Activated T-helper 2 cell treated with anti-CD3 and anti-CD28 coated beads, Interferon-gamma antibody, Interleukin-2, Interleukin-4, amounts not matched to agents 10 μg/mL and 5 μg/mL and 100 μg/mL, durations not matched to agents 14 hours and 24 hours and 36 hours (primary cell): ENCODE measurements at regions of chr9 and their contacts with region 1.

Region 1: GRCh38 chr9:130866474-130866965 is 30.1 kb downstream of the QRFP start:
- DNase-seq: peak; percentile 31
- H3K4me3 Mint-ChIP-seq: no peak overlapping the region
- H3K27ac Mint-ChIP-seq: no peak overlapping the region
- H3K4me1 Mint-ChIP-seq: no peaks in the 10 kb centered on the region
- H3K27me3 Mint-ChIP-seq: no peaks in the 10 kb centered on the region

Region 2: GRCh38 chr9:130770679-130771442 is 95.7 kb before region 1 on chr9:
- intact Hi-C with region 1: loop called (anchors 1 kb)
- DNase-seq: no peak
- H3K4me3 Mint-ChIP-seq: no peak overlapping the region
- H3K27ac Mint-ChIP-seq: no peak overlapping the region
- H3K4me1 Mint-ChIP-seq: peaks cover 9% of the 10 kb centered on the region
- H3K27me3 Mint-ChIP-seq: no peaks in the 10 kb centered on the region

Region 3: DNA sequence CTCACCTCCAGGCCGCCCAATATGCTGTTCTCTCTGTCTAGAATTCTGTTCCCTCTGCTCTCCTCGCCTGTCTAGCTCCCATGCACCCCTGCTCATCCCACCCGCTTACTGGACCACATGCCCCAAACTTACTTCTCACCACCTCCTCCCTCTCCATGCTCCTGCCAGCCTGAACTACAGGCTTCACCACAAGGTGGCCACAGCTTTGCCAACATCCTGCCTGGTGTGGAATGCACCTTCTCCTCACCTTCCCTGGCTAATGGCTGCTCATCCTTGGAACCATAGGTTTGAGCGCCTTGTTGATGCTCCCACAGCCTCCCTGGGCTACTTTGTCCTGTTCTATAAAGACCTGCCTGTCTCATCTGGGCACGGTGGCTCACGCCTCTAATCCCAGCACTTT is 152.1 kb after region 1 on chr9:
- intact Hi-C with region 1: no loop called
- DNase-seq: no peak
- H3K4me3 Mint-ChIP-seq: no peak overlapping the region
- H3K27ac Mint-ChIP-seq: no peak overlapping the region
- H3K4me1 Mint-ChIP-seq: no peaks in the 10 kb centered on the region
- H3K27me3 Mint-ChIP-seq: peaks cover 4% of the 10 kb centered on the region

Region 4: DNA sequence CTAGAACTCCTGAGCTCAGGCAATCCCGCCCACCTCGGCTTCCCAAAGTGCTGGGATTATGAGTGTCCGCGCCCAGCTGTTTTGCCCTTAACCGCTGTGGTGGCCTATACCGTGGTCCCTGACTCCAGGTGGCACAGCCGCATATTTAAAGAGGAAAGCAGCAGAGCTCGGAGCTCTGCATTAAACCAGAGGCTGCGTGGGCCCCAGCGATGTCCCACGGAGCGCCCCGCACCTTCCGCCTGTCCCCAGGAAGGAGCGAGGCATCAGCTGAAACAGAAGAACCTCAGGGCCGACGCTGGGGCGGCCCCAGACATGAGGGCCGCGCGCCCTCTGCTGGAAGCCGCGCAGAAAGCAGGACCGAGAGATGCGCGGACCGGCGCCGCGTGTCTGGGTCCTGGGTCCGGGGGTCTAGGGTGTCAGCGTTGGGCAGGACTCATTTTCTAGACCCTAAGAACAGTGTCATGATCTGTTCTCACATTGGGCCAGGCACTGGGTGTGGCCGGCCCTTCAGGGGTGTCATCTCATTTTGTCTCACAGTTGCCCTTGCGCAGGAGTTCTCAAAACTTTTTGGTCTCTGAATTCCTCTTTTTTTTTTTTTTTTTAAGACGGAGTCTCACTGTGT is 180.2 kb after region 1 on chr9:
- intact Hi-C with region 1: loop called (anchors 2 kb)
- DNase-seq: peak; percentile 60
- H3K4me3 Mint-ChIP-seq: no peak overlapping the region
- H3K27ac Mint-ChIP-seq: no peak overlapping the region
- H3K4me1 Mint-ChIP-seq: no peaks in the 10 kb centered on the region
- H3K27me3 Mint-ChIP-seq: peaks cover 2% of the 10 kb centered on the region